Right ventricle myocardium superior (tissue), 1 donor: ENCODE measurements at regions of chr6 and their contacts with region 1.

Region 1: DNA sequence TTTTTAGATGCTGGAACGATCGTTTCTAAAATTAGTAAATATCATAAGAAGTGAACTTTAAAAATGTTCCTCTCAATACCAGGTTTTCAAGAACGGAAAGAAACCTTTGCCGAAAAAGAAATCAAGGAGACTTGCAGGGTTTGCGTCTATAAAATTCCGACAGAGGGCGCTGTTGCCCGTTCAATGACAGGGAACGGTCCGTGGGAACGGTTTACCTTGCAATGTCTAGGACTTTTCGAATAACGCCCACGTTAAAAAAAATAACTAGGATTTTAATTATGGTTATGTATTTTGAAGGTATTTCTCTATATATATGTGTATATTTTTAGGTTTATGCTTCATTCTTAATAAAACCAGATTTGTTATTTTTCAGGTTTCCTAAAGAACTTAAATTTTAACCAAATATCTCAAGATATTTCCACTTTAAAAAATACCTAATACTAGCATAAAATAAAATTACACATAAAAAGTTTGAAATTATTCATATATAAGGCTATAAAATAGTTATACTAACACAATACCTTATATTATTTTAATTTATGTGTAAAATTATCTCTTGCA is 2.5 kb upstream of the TFAP2B start:
- DNase-seq: peak; percentile 49
- ATAC-seq: peak; percentile 65

Region 2: DNA sequence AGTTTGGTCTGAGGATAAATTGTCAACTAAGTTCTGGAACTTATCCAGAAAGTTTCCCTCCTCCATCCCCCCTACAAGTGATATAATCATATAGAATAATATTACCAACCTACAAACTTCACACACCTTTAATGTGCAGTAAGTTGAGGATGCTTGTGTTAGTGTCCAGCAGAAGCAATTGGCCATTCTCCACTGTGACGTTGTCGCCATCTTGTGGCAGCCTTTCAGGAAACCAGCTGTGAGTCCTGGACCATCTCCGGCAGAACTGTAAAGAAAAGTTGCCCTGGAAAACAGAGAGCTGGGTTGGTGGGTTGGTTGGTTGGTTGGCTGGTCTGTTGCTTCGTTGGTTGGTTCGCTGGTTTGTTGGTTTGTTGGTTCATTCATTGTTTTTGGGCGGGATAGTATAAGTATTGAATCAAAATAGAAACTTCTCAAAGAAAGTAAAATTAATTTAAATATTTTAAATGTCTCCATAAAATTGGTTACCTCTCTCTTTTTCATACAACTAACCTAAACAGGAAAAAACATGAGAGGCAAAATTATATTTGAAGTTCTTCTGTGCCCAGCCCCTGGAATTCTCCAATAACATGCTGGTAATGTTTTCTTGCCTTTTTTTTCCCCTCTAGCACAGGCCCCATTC is 1143.7 kb after region 1 on chr6:
- intact Hi-C with region 1: loop called (anchors 5 kb)
- DNase-seq: peak; percentile 60
- ATAC-seq: peak; percentile 65